ENCODE measurements at regions of chr10 and their contacts with region 1.

Region 1: GRCh38 chr10:77641788-77642397 is 4.3 kb upstream of the KCNMA1 start:
- DNase-seq: peak; percentile 82
- H3K4me3 Mint-ChIP-seq: no peak overlapping the region
- H3K27ac Mint-ChIP-seq: no peak overlapping the region
- H3K4me1 Mint-ChIP-seq: peaks cover 7% of the 10 kb centered on the region
- H3K27me3 Mint-ChIP-seq: no peaks in the 10 kb centered on the region
- CTCF ChIP-seq: peak; percentile 66

Region 2: DNA sequence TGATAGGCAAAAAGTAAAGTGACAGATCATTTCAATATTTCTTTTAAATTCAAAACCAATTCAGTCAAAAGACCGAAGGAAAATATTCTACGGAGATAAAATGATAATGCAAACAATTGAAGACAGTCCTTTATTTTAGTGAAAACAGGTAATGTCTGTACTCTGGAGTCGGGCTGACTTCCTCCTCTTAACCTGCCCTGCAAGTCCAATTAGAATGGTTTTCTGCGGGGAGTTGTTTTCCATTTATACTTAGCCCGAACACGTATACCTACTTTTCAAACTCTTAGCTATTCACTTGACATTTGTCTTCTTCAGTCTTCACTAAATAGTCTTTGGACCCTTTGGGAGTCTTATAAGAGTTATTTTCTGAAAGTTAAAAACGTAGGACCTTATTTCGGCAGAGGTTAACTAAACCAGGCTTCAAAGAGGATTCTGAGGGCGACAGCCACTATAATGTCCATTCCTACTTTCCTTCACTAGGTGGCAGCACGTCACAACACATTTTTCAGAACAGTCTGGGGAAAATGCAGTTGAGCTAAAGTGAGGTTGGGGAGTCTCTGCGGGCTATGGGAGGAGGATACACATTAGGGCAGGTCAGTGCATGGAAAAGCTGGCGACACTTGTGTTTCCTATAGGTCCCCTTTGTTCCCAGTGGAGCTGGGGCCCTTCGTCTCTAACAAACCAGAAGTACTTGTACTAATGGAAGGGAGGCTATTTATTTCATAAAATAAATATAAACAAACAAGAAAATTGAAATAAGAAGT is 476.3 kb before region 1 on chr10:
- CTCF ChIA-PET with region 1: interaction called, 267 read pairs
- POLR2A ChIA-PET with region 1: interaction called, 6 read pairs
- intact Hi-C with region 1: loop called (anchors 1 kb)
- DNase-seq: peak; percentile 79
- H3K4me3 Mint-ChIP-seq: no peak overlapping the region
- H3K27ac Mint-ChIP-seq: peak overlapping the region; percentile 81
- H3K4me1 Mint-ChIP-seq: peaks cover 37% of the 10 kb centered on the region
- H3K27me3 Mint-ChIP-seq: no peaks in the 10 kb centered on the region
- CTCF ChIP-seq: peak; percentile 77

Region 3: GRCh38 chr10:77173615-77174461 is 468.1 kb before region 1 on chr10:
- CTCF ChIA-PET with region 1: interaction called, 267 read pairs
- POLR2A ChIA-PET with region 1: interaction called, 7 read pairs
- intact Hi-C with region 1: loop called (anchors 1 kb)
- DNase-seq: peak; percentile 77
- H3K4me3 Mint-ChIP-seq: no peak overlapping the region
- H3K27ac Mint-ChIP-seq: no peak overlapping the region
- H3K4me1 Mint-ChIP-seq: peaks cover 5% of the 10 kb centered on the region
- H3K27me3 Mint-ChIP-seq: no peaks in the 10 kb centered on the region
- CTCF ChIP-seq: peak; percentile 89

Region 4: GRCh38 chr10:77251297-77252013 is 390.4 kb before region 1 on chr10:
- CTCF ChIA-PET with region 1: interaction called, 55 read pairs
- POLR2A ChIA-PET with region 1: interaction called, 6 read pairs
- intact Hi-C with region 1: loop called (anchors 1 kb)
- DNase-seq: peak; percentile 50
- H3K4me3 Mint-ChIP-seq: no peak overlapping the region
- H3K27ac Mint-ChIP-seq: no peak overlapping the region
- H3K4me1 Mint-ChIP-seq: peaks cover 13% of the 10 kb centered on the region
- H3K27me3 Mint-ChIP-seq: no peaks in the 10 kb centered on the region
- CTCF ChIP-seq: peak; percentile 86

Region 5: DNA sequence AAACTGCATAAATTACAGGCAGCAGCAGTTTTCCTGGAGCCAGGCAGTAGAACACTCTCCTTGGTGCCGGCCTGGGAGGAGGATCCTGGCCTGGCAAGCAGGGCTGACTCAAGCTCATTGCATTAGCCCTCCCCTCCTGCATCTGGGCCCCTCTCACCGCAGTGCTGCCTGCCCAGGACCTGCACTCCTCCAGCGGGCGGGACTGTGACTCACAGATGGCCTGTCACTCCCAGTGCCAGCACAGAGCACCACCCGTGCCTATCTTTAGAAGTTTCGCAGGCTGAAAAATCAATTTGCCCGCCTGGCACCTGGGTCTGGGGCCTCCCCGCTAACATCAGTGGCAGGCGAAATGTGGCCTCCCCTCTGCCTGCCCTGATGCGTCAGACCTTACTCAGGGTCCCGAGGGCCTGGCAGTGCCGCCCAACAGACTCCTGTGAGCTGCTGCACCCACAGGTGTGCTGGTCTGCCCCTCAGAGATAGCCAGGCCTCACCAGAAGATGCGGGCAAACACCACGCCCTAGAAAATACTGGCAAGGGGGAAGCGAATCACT is 128.0 kb before region 1 on chr10:
- CTCF ChIA-PET with region 1: interaction called, 4 read pairs
- POLR2A ChIA-PET with region 1: no interaction called
- intact Hi-C with region 1: loop called (anchors 5 kb)
- DNase-seq: peak; percentile 79
- H3K4me3 Mint-ChIP-seq: no peak overlapping the region
- H3K27ac Mint-ChIP-seq: peak overlapping the region; percentile 23
- H3K4me1 Mint-ChIP-seq: peaks cover 32% of the 10 kb centered on the region
- H3K27me3 Mint-ChIP-seq: no peaks in the 10 kb centered on the region
- CTCF ChIP-seq: no peak

Region 6: DNA sequence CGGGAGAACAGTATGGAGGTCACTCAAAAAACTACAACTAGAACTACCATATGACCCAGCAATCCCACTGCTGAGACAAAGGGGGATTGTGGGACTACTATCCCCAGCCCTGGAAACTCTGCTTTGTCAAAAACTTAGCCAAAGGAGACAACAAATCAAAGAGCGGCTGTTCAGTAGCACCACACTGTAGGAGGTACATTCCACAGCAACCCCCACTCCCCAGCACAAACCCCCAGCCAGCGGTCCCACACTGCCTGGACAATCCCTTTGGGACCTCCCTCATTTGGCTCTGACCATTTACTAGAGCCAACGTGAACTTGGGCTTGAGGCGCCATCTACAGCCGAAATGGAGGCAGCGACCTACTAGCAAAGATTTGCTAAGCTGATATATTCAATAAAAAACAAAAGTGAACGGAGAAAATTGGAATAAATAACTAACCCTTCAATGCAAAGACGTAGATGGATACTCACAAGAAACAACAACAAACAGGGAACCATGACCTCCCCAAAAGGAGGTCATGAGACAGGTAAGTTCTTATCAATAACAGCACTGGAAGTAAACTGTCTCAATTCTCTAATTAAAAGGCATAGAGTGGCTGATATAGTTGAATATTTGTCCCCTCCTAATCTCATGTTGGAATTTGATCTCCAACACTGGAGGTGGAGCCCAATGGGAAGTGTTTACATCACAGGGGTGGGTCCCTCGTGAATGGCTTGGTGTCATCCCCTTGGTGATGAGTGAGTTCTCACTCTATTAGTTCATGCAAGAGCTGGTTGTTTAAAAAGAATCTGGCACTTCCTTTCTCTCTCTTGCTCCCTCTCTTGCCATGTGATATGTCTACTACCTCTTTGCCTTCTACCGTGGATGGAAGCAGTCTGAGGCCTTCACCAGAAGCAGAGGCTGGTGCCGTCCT is 114.7 kb after region 1 on chr10:
- CTCF ChIA-PET with region 1: interaction called, 6 read pairs
- POLR2A ChIA-PET with region 1: interaction called, 4 read pairs
- intact Hi-C with region 1: loop called (anchors 1 kb)
- DNase-seq: peak; percentile 80
- H3K4me3 Mint-ChIP-seq: no peak overlapping the region
- H3K27ac Mint-ChIP-seq: no peak overlapping the region
- H3K4me1 Mint-ChIP-seq: peaks cover 38% of the 10 kb centered on the region
- H3K27me3 Mint-ChIP-seq: no peaks in the 10 kb centered on the region
- CTCF ChIP-seq: peak; percentile 81

Measured in MCF 10A (cell line).